ENCODE measurements at regions of chr9 and their contacts with region 1.

Region 1: DNA sequence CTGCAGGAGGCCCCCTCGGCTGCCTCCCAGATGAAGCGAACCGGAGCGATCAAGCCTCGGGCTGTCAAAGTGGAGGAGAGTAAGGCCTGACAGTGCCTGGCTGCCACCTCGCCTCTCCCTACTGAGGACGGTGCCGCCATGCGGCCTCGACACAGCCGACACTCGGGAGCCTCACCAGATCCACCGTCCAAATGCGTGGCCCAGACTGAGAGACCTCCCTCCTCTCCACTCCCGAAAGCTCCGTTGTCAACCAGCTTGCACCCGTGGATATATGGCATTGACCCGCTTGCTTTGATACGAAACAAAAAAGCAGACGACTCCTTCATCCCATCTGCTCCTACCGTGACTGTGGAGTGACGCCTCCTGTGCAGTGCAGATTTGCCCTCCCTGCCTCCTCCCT is 6.9 kb upstream of the POMT1 start:
- DNase-seq: no peak
- ATAC-seq: no peak

Region 2: GRCh38 chr9:130315446-130316226 is 1180.1 kb before region 1 on chr9:
- intact Hi-C with region 1: loop called (anchors 5 kb)
- DNase-seq: no peak
- ATAC-seq: no peak